ENCODE measurements at regions of chr10 and their contacts with region 1.

Region 1: GRCh38 chr10:103564776-103565520 is 71.4 kb downstream of the NEURL1 start:
- DNase-seq: peak; percentile 74
- H3K4me3 Mint-ChIP-seq: no peak overlapping the region
- H3K27ac Mint-ChIP-seq: no peak overlapping the region
- H3K4me1 Mint-ChIP-seq: no peaks in the 10 kb centered on the region
- H3K27me3 Mint-ChIP-seq: peaks cover 2% of the 10 kb centered on the region

Region 2: GRCh38 chr10:103576862-103577261 is 11.9 kb after region 1 on chr10:
- CTCF ChIA-PET with region 1: interaction called, 17 read pairs
- intact Hi-C with region 1: no loop called
- DNase-seq: no peak
- H3K4me3 Mint-ChIP-seq: no peak overlapping the region
- H3K27ac Mint-ChIP-seq: no peak overlapping the region
- H3K4me1 Mint-ChIP-seq: no peaks in the 10 kb centered on the region
- H3K27me3 Mint-ChIP-seq: no peaks in the 10 kb centered on the region

Measured in activated naive CD4-positive, alpha-beta T cell treated with anti-CD3 and anti-CD28 coated beads for 36 hours (primary cell).